Activated CD4-positive, alpha-beta memory T cell treated with anti-CD3 and anti-CD28 coated beads, Interleukin-2, amount 10 ng/mL, durations not matched to agents 7 days and 5 days (primary cell): ENCODE measurements at regions of chr10 and their contacts with region 1.

Region 1: DNA sequence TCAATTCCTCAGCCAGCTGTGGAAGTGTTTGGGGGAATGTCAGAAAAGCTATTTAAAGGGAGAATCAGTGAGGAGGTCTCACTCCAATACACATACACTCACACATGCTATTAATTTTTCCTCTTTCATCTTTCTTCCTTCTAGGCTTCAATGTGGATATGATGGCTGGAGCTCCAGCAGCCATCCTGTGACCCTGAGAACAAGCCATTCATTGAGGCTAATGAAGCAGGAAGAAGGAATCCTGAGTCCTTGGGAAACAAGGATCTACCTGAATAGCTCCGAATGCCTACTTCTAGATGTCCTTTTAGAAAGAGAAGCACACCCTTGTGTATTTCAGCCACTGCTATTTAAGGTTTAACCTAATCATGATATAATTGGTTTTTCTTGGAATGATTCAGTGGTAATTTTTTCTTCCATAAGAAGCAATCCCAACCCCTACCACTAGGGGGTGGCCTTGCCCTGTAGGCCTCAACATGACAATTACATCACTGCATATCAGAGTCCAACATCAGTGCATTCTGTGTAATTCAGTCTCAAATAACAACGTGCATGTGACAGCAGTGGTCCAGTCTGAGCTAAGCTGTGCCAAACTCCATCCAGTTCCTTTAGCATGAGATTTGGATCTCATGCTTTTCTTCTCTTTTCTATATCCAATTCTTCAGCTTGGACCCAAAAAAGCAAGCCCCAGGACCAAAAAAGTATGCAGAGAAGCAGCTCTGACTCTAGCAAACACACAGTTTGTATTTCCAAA is 85.3 kb upstream of the ANKRD1 start:
- DNase-seq: peak; percentile 69
- H3K4me3 Mint-ChIP-seq: no peak overlapping the region
- H3K27ac Mint-ChIP-seq: peak overlapping the region; percentile 44
- H3K4me1 Mint-ChIP-seq: peaks cover 26% of the 10 kb centered on the region
- H3K27me3 Mint-ChIP-seq: peaks cover 13% of the 10 kb centered on the region

Region 2: GRCh38 chr10:90947030-90947940 is 58.9 kb before region 1 on chr10:
- CTCF ChIA-PET with region 1: interaction called, 10 read pairs
- POLR2A ChIA-PET with region 1: no interaction called
- DNase-seq: peak; percentile 17
- H3K4me3 Mint-ChIP-seq: no peak overlapping the region
- H3K27ac Mint-ChIP-seq: peak overlapping the region; percentile 52
- H3K4me1 Mint-ChIP-seq: peaks cover 17% of the 10 kb centered on the region
- H3K27me3 Mint-ChIP-seq: peaks cover 12% of the 10 kb centered on the region

Region 3: DNA sequence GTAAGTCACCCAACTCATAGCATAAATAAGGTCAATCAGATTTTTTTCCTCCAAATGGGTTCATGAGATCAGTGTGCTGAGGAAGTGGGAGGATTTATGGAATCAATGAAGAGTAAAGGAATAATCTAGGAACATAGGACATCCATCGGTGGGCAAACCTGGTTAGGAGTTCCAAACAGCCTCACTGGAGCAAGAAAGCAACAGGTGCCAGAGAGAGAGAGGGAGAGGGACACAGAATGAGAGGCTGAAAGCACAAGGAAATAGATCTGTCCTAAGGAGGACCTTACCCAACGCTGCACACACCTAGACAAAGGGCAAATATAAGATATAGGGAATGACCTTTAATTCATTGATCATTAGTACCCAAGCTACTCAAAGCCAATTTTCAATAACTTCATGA is 34.2 kb after region 1 on chr10:
- CTCF ChIA-PET with region 1: no interaction called
- POLR2A ChIA-PET with region 1: no interaction called
- DNase-seq: no peak
- H3K4me3 Mint-ChIP-seq: no peak overlapping the region
- H3K27ac Mint-ChIP-seq: no peak overlapping the region
- H3K4me1 Mint-ChIP-seq: no peaks in the 10 kb centered on the region
- H3K27me3 Mint-ChIP-seq: peaks cover 18% of the 10 kb centered on the region

Region 4: GRCh38 chr10:91163269-91163868 is 157.2 kb after region 1 on chr10:
- CTCF ChIA-PET with region 1: interaction called, 12 read pairs
- POLR2A ChIA-PET with region 1: interaction called, 6 read pairs
- DNase-seq: peak; percentile 78
- H3K4me3 Mint-ChIP-seq: peak overlapping the region; percentile 86
- H3K27ac Mint-ChIP-seq: peak overlapping the region; percentile 80
- H3K4me1 Mint-ChIP-seq: peaks cover 30% of the 10 kb centered on the region
- H3K27me3 Mint-ChIP-seq: peaks cover 2% of the 10 kb centered on the region

Region 5: DNA sequence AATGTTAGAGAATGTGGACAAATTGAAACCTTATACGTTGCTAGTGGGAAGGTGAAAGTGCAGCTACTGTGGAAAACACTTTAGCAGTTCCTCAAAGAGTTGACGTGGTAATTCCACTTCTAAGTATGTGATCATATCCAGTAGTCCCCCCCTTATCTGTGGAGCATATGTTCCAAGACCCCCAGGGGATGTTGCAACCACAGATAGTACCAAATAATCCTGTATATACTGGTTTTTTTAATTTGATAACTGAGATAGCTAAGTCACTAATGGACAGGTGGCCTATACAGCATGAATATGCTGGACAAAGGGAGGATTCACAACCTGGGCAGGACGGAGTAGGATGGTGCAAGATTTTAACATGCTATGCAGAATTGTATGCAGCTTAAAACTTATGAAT is 251.1 kb after region 1 on chr10:
- CTCF ChIA-PET with region 1: interaction called, 133 read pairs
- POLR2A ChIA-PET with region 1: interaction called, 11 read pairs
- DNase-seq: no peak
- H3K4me3 Mint-ChIP-seq: no peak overlapping the region
- H3K27ac Mint-ChIP-seq: no peak overlapping the region
- H3K4me1 Mint-ChIP-seq: no peaks in the 10 kb centered on the region
- H3K27me3 Mint-ChIP-seq: no peaks in the 10 kb centered on the region